Common myeloid progenitor, CD34-positive (primary cell): ENCODE measurements at regions of chr6 and their contacts with region 1.

Region 1: GRCh38 chr6:88157106-88157505 is 9.0 kb downstream of the CNR1 start:
- DNase-seq: no peak
- H3K4me3 ChIP-seq: no peak overlapping the region
- H3K27ac ChIP-seq: no peak overlapping the region
- H3K4me1 ChIP-seq: no peaks in the 10 kb centered on the region
- H3K27me3 ChIP-seq: peaks cover 0 to 8% (median 0%) of the 10 kb centered on the region in 5 experiments

Region 2: GRCh38 chr6:88246654-88247053 is 89.5 kb after region 1 on chr6:
- CTCF ChIA-PET with region 1: no interaction called
- POLR2A ChIA-PET with region 1: interaction called, 12 read pairs
- DNase-seq: peak in 2 of 3 donors; percentile 19 to 46
- H3K4me3 ChIP-seq: no peak overlapping the region
- H3K27ac ChIP-seq: no peak overlapping the region
- H3K4me1 ChIP-seq: no peaks in the 10 kb centered on the region
- H3K27me3 ChIP-seq: no peaks in the 10 kb centered on the region